ENCODE measurements at regions of chr11 and their contacts with region 1.

Region 1: GRCh38 chr11:75388386-75389275 is 10.7 kb upstream of the RPS3 start:
- DNase-seq: peak; percentile 85
- H3K4me3 ChIP-seq: peak overlapping the region in 1 of 2 experiments; percentile 35; a peak in 1 of 4 replicates
- H3K27ac ChIP-seq: no peak overlapping the region
- H3K4me1 ChIP-seq: peaks cover 0 to 9% of the 10 kb centered on the region in 2 experiments; a peak in 1 of 4 replicates
- H3K27me3 ChIP-seq: no peaks in the 10 kb centered on the region
- CTCF ChIP-seq: peak; percentile 89
- EP300 ChIP-seq: no peak
- RAD21 ChIP-seq: peak; percentile 91

Region 2: DNA sequence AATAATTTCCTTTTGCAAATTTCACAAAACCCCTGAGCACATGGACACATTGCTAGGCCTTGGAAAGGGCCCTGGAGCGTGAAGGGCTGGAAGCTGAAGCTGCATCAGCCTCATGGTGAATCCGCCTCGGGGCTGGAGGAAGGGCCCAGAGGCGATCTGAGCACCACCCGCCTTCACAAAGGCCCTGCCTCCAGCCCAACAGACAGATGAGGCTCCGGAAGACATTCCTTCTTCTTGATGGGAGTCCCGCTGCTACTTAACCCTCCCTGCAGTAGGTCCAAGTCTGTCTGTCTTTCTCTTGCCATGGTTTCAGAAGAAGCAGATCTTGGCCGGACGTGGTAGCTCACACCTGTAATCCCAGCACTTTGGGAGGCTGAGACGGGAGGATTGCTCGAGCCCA is 53.7 kb before region 1 on chr11:
- CTCF ChIA-PET with region 1: interaction called, 39 read pairs
- POLR2A ChIA-PET with region 1: no interaction called
- DNase-seq: no peak
- H3K4me3 ChIP-seq: no peak overlapping the region
- H3K27ac ChIP-seq: no peak overlapping the region
- H3K4me1 ChIP-seq: peaks cover 33 to 58% of the 10 kb centered on the region in 2 experiments
- H3K27me3 ChIP-seq: no peaks in the 10 kb centered on the region
- CTCF ChIP-seq: no peak
- EP300 ChIP-seq: no peak
- RAD21 ChIP-seq: no peak

Region 3: GRCh38 chr11:75365711-75366181 is 22.9 kb before region 1 on chr11:
- CTCF ChIA-PET with region 1: interaction called, 13 read pairs
- POLR2A ChIA-PET with region 1: no interaction called
- DNase-seq: no peak
- H3K4me3 ChIP-seq: no peak overlapping the region
- H3K27ac ChIP-seq: no peak overlapping the region
- H3K4me1 ChIP-seq: no peaks in the 10 kb centered on the region
- H3K27me3 ChIP-seq: no peaks in the 10 kb centered on the region
- CTCF ChIP-seq: no peak
- EP300 ChIP-seq: no peak
- RAD21 ChIP-seq: no peak

Region 4: GRCh38 chr11:75406338-75406777 is 17.7 kb after region 1 on chr11:
- CTCF ChIA-PET with region 1: interaction called, 35 read pairs
- POLR2A ChIA-PET with region 1: no interaction called
- DNase-seq: peak; percentile 61
- H3K4me3 ChIP-seq: no peak overlapping the region
- H3K27ac ChIP-seq: peak overlapping the region; percentile 3 to 74; a peak in 3 of 4 replicates
- H3K4me1 ChIP-seq: peaks cover 22 to 43% of the 10 kb centered on the region in 2 experiments
- H3K27me3 ChIP-seq: no peaks in the 10 kb centered on the region
- CTCF ChIP-seq: no peak
- EP300 ChIP-seq: peak in 1 of 2 experiments; percentile 57; a peak in 1 of 4 replicates
- RAD21 ChIP-seq: no peak

Region 5: DNA sequence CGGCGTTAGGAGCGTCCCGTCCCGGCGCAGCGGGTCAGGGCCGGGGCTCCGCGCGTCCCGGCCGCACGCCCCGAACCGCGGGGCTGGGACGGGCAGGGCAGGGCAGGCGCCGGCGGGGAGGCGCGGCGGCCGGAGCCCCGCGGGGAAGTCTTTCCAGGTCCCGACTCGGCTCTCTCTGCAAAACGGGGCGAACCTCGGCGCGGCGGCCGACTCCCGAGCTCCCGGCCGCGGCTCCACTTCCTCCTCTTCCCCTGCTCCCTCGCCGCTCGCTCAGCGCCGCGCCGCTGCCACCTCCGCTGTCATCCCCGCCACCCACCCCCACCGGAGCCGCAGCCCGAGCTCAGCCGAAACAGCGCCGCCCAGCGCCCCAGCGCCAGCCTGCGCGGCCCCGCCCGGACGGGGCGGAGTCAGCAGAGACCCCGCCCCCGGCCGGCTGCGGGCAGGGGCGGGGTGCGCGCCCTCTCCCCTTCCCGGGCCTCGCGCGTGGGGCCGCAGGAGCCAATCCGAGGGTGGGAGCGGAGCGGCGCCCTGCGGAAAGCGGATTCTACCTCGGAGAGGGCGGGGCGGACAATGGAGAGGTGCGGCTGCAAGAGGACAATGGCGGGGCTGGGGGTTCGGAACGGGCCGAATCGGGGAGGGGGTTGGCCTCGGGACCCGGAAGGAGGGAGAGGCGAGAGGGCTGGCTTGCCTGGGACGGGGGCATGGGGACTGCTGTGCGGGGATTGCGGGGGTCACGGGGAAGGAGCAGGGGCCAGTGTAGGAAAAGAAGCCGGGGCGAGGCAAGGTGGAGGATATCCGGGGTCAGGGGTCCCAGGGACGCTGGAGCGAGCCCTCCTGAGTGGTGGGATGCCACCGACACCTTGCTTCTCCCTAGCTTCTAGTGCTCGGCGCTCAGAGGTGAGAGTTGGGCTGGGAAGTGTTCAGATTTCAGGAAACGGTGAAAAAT is 137.2 kb after region 1 on chr11 and contains the start of gene GDPD5:
- CTCF ChIA-PET with region 1: interaction called, 51 read pairs
- POLR2A ChIA-PET with region 1: no interaction called
- DNase-seq: peak; percentile 99
- H3K4me3 ChIP-seq: peak within 1 kb of the TSS; percentile 70 to 73
- H3K27ac ChIP-seq: peak within 1 kb of the TSS in 1 of 2 experiments; percentile 60; a peak in 1 of 4 replicates
- H3K4me1 ChIP-seq: peaks cover 0 to 25% of the 10 kb centered on the region in 2 experiments; a peak in 1 of 4 replicates
- H3K27me3 ChIP-seq: no peaks in the 10 kb centered on the region
- CTCF ChIP-seq: peak; percentile 53
- EP300 ChIP-seq: no peak
- RAD21 ChIP-seq: peak; percentile 44
- polyA plus RNA-seq, gene GDPD5: 1.6 and 2.2 TPM in 2 replicates

Region 6: GRCh38 chr11:75697906-75698563 is 309.4 kb after region 1 on chr11:
- CTCF ChIA-PET with region 1: no interaction called
- POLR2A ChIA-PET with region 1: no interaction called
- DNase-seq: no peak
- H3K4me3 ChIP-seq: no peak overlapping the region
- H3K27ac ChIP-seq: no peak overlapping the region
- H3K4me1 ChIP-seq: no peaks in the 10 kb centered on the region; a peak in 1 of 4 replicates
- H3K27me3 ChIP-seq: no peaks in the 10 kb centered on the region
- CTCF ChIP-seq: no peak
- EP300 ChIP-seq: no peak
- RAD21 ChIP-seq: no peak